Naive thymus-derived CD8-positive, alpha-beta T cell (primary cell): ENCODE measurements at regions of chr5 and their contacts with region 1.

Region 1: DNA sequence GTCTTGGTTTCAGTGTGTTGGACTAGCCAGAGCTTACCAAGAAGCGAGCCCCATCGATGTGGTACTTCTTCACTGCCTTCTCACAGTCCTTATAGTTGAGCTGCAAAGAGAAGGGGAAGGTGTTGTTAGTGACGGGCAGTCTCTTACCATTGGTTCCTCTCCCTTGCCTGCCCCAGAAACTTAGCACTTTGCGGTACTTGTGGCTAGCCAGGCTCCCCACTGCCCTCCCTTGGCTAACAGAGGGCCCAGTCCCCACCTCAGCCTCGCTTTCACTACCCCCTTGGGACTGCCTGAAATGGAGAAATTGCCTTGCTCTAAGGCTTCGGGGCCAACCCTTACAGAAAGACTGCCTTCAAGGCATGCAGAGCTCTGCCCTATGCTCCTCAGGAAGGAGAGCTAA is 4.3 kb downstream of the LCP2 start:
- DNase-seq: peak in 5 of 10 donors; percentile 36 to 70 (median 51)
- ATAC-seq: peak; percentile 20 to 39
- H3K4me3 Mint-ChIP-seq: peak overlapping the region; percentile 97 to 100 (median 99)
- H3K27ac Mint-ChIP-seq: peak overlapping the region; percentile 92 to 99 (median 96)
- H3K4me1 Mint-ChIP-seq: peaks cover 58 to 97% (median 76%) of the 10 kb centered on the region in 4 donors
- H3K27me3 Mint-ChIP-seq: no peaks in the 10 kb centered on the region

Region 2: GRCh38 chr5:170262061-170263045 is 30.9 kb before region 1 on chr5:
- POLR2A ChIA-PET with region 1: interaction called, 123 read pairs
- DNase-seq: peak in 8 of 10 donors; percentile 62 to 90 (median 77)
- ATAC-seq: peak; percentile 81 to 90
- H3K4me3 Mint-ChIP-seq: peak overlapping the region; percentile 29 to 80 (median 72)
- H3K27ac Mint-ChIP-seq: peak overlapping the region; percentile 84 to 99 (median 96)
- H3K4me1 Mint-ChIP-seq: peaks cover 48 to 95% (median 90%) of the 10 kb centered on the region in 4 donors
- H3K27me3 Mint-ChIP-seq: no peaks in the 10 kb centered on the region

Region 3: DNA sequence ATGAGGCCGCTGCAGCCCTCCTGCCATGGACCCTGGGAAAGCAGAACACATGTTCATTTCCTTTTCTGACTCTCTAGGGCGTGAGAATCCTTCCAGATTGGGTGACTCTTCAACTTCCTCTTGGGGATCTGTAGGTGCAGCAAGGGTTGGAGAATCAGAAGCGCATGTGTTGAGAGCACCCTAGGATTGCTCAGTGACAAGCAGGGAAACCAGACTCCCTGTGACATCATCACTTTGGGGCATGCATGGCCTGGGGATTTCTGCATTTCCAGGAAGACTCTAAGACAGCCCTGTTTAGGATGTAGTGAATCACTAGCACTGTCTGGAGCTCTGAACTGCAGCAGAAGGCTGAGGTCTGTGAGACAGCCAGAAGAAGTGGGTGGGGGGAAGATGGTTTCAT is 19.4 kb after region 1 on chr5:
- POLR2A ChIA-PET with region 1: interaction called, 38 read pairs
- DNase-seq: peak in 2 of 10 donors; percentile 45 to 71
- ATAC-seq: peak; percentile 75 to 77
- H3K4me3 Mint-ChIP-seq: peak overlapping the region; percentile 31 to 86 (median 80)
- H3K27ac Mint-ChIP-seq: peak overlapping the region; percentile 85 to 96 (median 92)
- H3K4me1 Mint-ChIP-seq: peaks cover 36 to 80% (median 65%) of the 10 kb centered on the region in 4 donors
- H3K27me3 Mint-ChIP-seq: no peaks in the 10 kb centered on the region

Region 4: GRCh38 chr5:170327168-170327567 is 33.9 kb after region 1 on chr5:
- POLR2A ChIA-PET with region 1: interaction called, 280 read pairs
- DNase-seq: no peak
- ATAC-seq: no peak
- H3K4me3 Mint-ChIP-seq: no peak overlapping the region
- H3K27ac Mint-ChIP-seq: no peak overlapping the region
- H3K4me1 Mint-ChIP-seq: peaks cover 12 to 15% (median 14%) of the 10 kb centered on the region in 4 donors
- H3K27me3 Mint-ChIP-seq: no peaks in the 10 kb centered on the region

Region 5: GRCh38 chr5:170338933-170339779 is 45.9 kb after region 1 on chr5:
- POLR2A ChIA-PET with region 1: interaction called, 280 read pairs
- DNase-seq: peak in 9 of 10 donors; percentile 52 to 84 (median 64)
- ATAC-seq: peak; percentile 70 to 74
- H3K4me3 Mint-ChIP-seq: peak overlapping the region in 5 of 10 donors; percentile 22 to 57 (median 32)
- H3K27ac Mint-ChIP-seq: peak overlapping the region in 9 of 10 donors; percentile 48 to 94 (median 90)
- H3K4me1 Mint-ChIP-seq: peaks cover 0 to 40% (median 35%) of the 10 kb centered on the region in 4 donors
- H3K27me3 Mint-ChIP-seq: no peaks in the 10 kb centered on the region